Posterior cingulate gyrus (tissue), 11 donors: ENCODE measurements at regions of chr4 and their contacts with region 1.

Region 1: DNA sequence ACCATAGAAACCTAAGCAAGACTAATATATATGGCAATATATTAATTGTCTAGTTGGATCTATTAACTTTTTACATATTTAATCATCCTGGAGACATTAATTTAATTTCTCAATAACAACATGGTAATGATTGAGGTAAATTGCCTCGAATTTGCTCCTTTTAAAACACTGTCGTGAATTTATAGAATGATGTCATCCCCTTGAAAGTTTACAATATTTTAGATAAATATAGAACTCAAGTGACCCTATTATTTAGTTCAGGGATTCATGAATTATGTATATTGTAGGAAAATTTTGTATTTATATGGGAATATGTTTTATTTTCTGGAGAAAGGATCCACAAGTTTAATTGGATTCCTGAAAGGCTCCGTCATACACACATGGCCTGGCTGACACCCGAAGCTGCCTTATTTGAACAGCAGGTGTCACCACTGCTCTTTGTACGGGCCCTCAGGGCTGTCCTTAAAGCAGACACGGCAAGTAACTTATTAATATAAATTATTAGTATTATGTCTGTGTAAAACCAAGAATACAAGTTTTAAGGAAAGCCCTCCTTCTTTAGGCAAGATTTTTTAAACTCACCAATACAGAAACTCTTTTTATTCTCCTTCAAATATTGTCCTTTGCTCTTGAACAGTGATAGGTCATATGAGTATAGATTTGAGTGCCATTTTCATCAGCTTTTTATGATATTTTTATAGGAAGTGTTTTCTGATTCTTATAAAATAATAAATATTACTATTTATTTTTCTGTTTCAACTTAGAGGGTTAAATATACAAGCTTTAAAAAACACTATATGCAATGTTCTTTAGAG is 1.9 kb upstream of the PLRG1 start:
- DNase-seq: peak; percentile 51 to 96 (median 75)

Region 2: GRCh38 chr4:154602404-154603020 is 50.4 kb after region 1 on chr4:
- intact Hi-C with region 1: no loop called
- DNase-seq: no peak

Region 3: DNA sequence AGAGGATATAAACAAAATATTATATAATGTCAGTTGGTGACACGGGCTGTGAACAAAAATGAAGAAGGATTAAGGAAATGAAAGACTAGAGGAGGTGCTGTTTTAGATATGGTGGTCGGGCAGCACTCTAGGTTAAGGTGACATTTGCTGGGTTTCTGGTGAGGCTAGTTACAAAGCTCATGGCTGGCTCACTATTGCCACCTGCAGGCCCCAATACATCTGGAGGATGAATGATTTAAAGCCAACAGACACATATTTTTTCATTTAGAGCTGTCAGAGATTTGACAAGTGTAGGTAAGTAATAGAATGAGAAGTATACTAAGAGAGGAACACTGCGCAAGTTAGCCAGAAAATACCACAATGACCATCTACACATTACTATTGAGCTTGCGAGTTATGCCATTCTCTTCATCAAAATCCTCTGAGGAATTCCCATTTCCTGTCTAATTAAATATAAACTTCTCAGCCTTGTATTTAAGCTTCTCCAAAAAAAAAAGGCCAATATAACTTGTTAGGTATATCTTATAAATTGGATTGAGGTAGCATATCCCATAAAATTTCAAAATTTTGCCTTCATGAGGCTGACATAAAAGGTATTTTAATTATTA is 66.7 kb after region 1 on chr4:
- intact Hi-C with region 1: loop called (anchors 1 kb)
- DNase-seq: peak in 7 of 10 donors; percentile 47 to 91 (median 70)

Region 4: DNA sequence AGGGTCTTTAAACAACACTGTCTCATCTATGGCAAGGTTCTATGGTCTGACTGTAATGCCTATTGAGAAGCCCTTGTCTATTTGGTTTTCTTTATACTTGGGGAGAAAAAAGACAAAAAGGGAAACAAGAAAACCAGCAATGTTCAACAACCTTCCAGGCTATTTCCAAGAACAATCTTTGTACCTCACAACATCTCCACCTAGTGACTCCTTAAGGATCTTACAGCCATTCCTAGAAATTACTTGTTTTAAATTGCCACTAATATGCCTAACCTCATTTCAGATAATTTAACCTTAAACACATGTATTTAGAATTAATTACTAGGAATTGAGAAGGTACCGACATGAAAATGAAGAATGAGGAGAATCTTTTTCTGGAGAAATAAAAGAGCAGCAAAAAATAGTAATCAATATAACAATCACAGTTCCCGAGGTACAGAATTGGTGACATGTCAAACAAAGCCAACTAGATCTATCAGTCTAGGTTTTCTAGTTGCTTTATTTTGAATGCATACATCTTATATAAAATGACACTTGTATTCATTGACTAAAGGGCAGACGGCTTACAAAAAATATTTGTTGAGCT is 227.4 kb after region 1 on chr4:
- intact Hi-C with region 1: loop called (anchors 10 kb)
- DNase-seq: no peak